Astrocyte of the cerebellum (primary cell): ENCODE measurements at regions of chr6 and their contacts with region 1.

Region 1: GRCh38 chr6:149082286-149082707 is 235.2 kb upstream of the TAB2 start:
- DNase-seq: peak; percentile 77
- H3K4me3 ChIP-seq: no peak overlapping the region
- CTCF ChIP-seq: peak; percentile 73

Region 2: DNA sequence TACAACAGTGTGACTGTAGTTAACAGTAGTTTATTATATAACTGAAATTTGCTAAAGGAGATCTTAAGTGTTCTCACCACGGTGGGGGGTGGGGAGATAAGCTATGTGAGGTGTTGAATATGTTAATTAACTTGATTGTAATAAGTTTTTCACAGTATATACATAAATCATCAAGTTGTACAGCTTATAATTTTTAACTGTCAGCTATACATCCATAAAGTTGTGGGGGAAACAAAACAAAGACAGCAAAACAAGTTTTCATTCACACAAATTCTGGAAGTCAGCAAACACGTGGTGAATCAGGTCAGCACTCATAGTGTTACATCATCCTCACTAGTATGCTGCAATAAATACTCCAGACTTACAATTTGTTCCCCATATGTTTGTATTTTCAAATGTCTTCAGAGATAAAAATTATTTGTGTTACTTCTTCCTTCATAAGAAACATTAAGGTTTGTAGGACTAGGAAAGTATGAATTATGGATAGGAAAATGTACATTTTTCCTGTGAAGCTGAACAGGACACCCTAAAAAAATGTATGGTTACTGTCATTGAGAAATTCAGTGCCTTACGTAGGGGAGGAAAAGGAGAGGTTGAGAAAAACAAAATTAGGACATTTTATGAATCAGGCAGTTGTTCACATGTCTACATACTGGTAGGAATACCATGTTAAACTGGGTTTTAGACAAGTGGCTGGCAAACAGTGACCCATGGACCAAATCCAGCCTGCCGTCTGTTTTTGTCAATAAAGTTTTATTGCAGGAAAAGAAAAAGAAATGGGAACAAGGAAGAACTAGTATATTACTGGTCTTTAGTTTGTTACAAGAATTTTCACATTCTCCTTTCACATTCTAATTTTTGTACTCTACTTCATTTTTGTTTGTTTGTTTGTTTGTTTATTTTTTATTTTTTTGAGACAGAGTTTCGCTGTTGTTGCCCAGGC is 323.8 kb after region 1 on chr6:
- in situ Hi-C with region 1: loop called (anchors 25 kb)
- DNase-seq: no peak
- H3K4me3 ChIP-seq: no peak overlapping the region
- CTCF ChIP-seq: no peak